AG04450 (cell line): ENCODE measurements at regions of chr1 and their contacts with region 1.

Region 1: GRCh38 chr1:55504306-55504731 is 289.2 kb upstream of the USP24 start:
- DNase-seq: no peak
- H3K4me3 ChIP-seq: no peak overlapping the region
- H3K27ac ChIP-seq: no peak overlapping the region
- H3K27me3 ChIP-seq: no peaks in the 10 kb centered on the region
- CTCF ChIP-seq: no peak

Region 2: GRCh38 chr1:55311979-55312378 is 192.3 kb before region 1 on chr1:
- CTCF ChIA-PET with region 1: no interaction called
- POLR2A ChIA-PET with region 1: interaction called, 10 read pairs
- DNase-seq: no peak
- H3K4me3 ChIP-seq: no peak overlapping the region
- H3K27ac ChIP-seq: no peak overlapping the region
- H3K27me3 ChIP-seq: no peaks in the 10 kb centered on the region
- CTCF ChIP-seq: no peak